Sigmoid colon (tissue), 7 donors: ENCODE measurements at regions of chr15 and their contacts with region 1.

Region 1: DNA sequence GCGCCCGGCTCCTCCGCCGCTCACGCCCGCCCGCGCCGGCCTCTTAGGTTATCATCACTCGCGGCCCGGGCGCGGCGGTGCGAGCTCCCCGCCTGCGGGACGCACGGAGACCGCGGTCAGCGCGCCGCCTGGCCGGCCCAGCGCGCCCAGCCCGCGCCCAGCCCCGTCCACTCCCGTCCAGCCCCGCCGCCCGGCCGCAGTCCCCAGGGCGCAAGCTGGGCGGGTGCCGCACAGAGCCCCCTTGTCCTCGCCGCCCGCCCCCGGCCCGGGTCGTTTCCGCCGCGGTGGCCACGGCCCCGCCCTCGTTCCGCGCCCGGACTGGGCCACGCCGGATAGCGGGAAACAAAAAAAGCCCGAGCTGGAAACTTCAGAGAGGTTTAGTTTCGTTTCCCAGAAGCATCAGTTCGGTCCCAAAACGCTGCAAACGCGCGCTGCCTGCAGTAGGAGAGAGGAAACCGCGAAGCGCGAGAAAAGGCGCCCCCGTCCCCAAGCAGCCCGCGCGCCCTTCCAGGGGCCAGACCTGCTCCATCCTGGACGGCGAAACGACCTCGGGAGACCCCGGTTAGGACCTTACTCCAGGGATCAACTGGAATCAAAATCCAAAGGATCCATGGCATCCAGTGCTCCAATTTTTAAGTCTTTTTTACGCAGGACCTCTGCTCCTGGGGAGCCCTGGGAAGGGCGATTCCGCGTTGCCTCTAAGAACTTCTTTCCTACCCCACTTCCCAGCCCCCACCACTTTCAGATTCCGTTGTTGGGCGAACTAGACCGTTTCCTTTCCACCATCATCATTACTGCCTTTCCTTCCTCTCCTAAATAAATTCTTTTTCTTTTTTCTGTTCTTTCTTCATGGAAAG is at the start of gene ATP10A:
- DNase-seq: peak; percentile 74
- H3K4me3 ChIP-seq: peak within 1 kb of the TSS; percentile 41 to 68 (median 66)
- H3K27ac ChIP-seq: peak within 1 kb of the TSS; percentile 73 to 95 (median 84)
- H3K4me1 ChIP-seq: peaks cover 0 to 48% (median 42%) of the 10 kb centered on the region in 4 donors
- H3K27me3 ChIP-seq: no peaks in the 10 kb centered on the region
- CTCF ChIP-seq: no peak
- EP300 ChIP-seq: no peak
- POLR2A ChIP-seq: no peak
- total RNA-seq, gene ATP10A: 1.8 to 7.7 (median 5.0) TPM

Region 2: GRCh38 chr15:25670025-25670554 is 193.2 kb before region 1 on chr15:
- intact Hi-C with region 1: loop called (anchors 10 kb)
- DNase-seq: peak; percentile 89
- H3K4me3 ChIP-seq: peak overlapping the region in 3 of 4 donors; percentile 21 to 34 (median 23)
- H3K27ac ChIP-seq: peak overlapping the region; percentile 68 to 92 (median 82)
- H3K4me1 ChIP-seq: peaks cover 0 to 43% (median 33%) of the 10 kb centered on the region in 4 donors
- H3K27me3 ChIP-seq: no peaks in the 10 kb centered on the region
- CTCF ChIP-seq: peak in 1 of 4 experiments; percentile 9
- EP300 ChIP-seq: peak in 1 of 4 donors; percentile 84
- POLR2A ChIP-seq: no peak

Region 3: DNA sequence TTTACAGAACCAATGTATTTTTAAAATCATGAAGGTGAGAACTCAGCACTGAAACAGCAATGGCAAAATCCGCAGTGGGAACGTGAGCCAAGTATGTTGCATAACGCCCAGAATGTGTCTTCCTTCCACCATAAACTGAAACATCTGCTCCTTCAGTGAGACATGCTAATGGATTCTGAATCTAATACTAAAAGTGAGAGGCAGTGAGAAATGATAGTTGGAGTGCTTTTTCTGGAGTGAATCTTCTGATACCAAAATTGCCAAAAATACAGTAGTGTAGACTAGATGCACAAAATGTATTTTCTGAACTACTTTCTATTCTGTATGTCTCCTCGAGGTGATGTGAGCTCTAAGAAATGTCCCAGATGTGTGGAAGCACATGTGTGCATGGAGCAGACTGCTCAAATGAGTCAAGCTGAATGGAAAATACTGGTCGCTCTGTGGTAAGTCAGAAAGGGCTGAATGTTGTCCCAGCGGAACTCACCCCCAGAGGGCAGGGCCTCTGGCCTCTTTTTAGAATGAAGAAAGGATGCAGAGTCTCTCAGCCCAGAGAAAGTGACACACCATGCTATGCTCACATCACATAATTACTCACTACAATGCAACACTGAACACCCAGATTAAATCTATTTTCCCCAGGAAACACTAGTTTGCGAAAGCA is 73.2 kb before region 1 on chr15:
- intact Hi-C with region 1: loop called (anchors 5 kb)
- DNase-seq: peak; percentile 91
- H3K4me3 ChIP-seq: peak overlapping the region in 1 of 4 donors; percentile 0
- H3K27ac ChIP-seq: peak overlapping the region; percentile 77 to 89 (median 86)
- H3K4me1 ChIP-seq: peaks cover 0 to 68% (median 54%) of the 10 kb centered on the region in 4 donors
- H3K27me3 ChIP-seq: no peaks in the 10 kb centered on the region
- CTCF ChIP-seq: peak in 1 of 4 experiments; percentile 19
- EP300 ChIP-seq: peak in 1 of 4 donors; percentile 51
- POLR2A ChIP-seq: no peak